Posterior cingulate gyrus (tissue), 11 donors: ENCODE measurements at regions of chr1 and their contacts with region 1.

Region 1: DNA sequence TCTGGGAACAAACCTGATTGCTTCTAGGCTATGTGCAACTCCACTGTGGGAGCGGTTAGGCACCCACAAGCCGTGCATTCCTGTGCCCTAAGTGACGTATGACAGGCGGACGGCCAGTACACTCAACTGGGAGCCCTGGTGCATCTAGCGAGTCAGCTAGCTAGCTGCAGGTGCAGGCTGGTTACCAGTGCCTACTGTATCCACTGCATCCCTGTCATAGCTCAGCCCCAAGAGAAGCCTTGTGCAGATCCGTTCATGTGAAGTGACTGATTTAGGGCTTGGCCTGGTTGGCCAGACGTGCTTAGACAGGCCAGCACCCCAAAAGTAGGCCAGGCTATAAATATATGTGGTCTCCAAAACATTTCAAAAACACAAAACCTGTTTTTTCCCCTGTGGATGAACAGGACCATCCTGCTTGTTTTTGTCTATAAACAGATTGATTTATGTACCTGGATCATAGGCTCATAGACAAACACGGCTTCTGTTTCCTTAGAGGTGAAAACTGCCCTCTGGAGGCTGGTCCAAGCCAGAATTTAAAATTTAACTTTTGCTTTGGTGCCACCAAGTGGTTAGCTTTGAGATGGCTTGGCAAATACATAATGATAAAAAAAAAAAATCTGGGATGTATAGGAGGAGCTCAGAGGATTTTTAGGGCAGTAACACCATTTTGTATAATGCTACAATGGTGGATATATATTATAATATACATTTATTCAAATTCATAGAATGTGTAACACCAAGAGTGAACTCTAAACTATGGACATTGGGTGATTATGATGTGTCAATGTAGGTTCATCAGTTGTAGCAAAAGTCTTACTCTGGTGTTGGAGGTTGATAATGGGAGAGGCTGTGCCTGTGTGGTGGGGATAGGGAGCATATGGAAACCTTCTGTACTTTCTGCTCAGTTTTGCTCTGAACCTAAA is 68.5 kb downstream of the GIPC2 start:
- DNase-seq: peak in 5 of 10 donors; percentile 32 to 86 (median 44)

Region 2: DNA sequence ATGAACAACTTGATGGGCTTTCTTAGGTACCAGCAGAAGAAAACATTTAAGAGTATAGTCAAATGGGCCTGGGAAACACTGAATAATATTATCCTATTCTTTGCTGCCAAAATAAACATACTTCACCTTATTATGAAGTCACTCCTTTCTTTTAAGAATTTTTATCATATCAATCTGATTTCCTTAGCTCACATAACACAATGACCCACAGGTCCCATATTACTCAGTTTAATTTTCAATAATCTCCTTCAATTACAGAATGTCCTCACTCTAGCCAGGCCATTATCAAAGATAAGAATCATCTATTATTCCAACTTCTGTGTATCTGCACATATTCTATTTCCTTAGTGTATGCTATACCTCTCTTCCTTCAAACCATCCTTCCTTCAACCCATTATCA is 958.1 kb before region 1 on chr1:
- intact Hi-C with region 1: loop called (anchors 10 kb)
- DNase-seq: no peak

Region 3: GRCh38 chr1:77281491-77282186 is 832.7 kb before region 1 on chr1 and contains the start of gene AK5:
- intact Hi-C with region 1: loop called (anchors 10 kb)
- DNase-seq: peak; percentile 46 to 95 (median 64)

Region 4: DNA sequence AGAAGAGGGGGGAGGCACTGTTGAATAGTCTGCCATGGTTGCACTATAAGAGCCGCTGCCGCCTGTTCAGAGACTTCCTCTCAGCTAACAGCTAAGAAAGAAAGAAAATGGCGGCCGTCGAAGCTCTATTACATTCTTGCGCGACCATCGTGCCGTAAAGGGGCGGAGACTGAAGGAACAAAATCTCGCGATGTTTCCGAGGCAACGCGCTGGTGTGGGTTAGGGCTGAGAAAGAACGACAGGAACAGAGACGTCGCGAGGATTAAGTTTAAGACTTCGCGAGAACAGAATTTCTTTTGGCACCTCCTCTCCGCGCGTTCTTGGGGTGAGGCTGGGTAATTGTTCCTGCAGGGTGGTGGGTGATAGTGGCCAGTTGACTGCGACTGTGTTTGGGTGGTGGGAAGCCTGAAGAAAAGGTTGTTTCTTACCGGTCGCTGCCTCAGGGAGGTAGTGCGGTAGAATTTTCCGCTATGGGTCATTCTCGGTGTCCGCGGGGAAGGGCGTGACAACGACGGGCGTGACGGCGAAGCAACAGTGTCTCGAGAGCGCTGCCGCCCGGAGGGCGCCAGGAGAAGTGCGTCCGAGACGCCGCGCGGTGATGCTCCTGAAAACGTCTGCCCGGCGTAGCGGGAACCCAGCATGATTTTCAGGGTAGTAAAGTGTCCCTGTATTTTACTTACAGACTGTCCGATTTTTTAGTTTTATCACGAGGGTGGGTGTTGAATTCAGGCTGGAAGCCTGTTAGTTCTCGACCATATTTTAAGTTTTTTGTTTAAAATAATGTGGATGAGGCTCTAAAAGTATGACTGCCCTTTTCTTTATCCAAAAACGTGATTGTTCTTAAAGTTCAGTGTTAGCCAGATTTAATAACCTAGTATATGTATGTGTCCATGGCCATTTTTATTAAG is 135.1 kb before region 1 on chr1 and contains the start of gene FUBP1:
- intact Hi-C with region 1: loop called (anchors 2 kb)
- DNase-seq: peak; percentile 84 to 98 (median 92)

Region 5: DNA sequence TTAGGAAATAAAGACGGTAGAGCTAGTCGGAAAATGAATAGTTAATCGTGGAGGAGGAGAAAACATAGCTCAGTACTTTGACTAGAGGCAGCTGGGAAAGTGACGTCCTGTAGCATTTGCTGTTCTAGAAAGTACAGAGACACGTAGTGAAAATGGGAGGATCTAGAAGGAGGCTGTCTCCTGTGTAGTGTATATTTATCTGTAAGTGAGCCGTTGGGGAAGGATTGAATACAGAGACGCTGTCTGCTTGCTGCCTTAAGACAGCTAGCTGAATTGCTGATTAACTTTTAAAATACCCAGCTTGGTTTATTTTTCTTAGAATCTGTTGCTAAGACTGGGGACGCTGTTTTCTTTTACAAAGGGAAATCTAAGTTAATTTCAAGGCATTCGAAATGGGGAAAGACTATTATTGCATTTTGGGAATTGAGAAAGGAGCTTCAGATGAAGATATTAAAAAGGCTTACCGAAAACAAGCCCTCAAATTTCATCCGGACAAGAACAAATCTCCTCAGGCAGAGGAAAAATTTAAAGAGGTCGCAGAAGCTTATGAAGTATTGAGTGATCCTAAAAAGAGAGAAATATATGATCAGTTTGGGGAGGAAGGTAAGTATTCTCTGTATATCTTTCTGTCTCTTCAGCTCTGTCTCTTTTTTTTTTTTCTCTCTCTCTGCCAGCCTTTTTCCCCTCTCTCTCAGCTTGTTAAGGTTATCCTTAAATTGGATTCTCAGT is 109.4 kb before region 1 on chr1 and contains the start of gene DNAJB4:
- intact Hi-C with region 1: loop called (anchors 10 kb)
- DNase-seq: peak in 4 of 10 donors; percentile 39 to 53 (median 46)

Region 6: DNA sequence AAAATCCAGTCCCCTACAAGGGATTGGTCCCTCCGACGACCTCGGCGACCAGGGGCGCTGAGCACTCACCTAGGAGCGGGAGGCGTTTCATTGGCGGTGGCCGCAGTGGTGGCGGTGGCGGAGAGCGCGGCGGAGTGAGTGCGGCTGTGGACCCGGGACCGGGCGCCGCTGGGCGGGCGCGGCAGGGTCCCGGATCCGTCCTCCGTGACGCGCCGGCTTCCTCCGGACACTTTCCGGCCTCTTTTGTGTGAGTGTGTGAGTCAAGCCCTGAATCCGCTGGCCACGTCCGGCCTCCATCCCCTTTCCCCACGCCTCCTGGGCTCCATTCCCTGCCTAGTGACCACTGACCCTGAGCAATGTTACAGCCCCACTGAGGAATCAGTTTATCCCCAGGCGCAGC is 892.3 kb after region 1 on chr1 and contains the start of gene ADGRL4:
- intact Hi-C with region 1: no loop called
- DNase-seq: peak in 3 of 10 donors; percentile 51 to 59 (median 59)